ENCODE measurements at regions of chr15 and their contacts with region 1.

Region 1: GRCh38 chr15:56918046-56918938 is at the start of gene TCF12:
- DNase-seq: peak; percentile 95
- ATAC-seq: peak; percentile 85
- H3K4me3 Mint-ChIP-seq: peak within 1 kb of the TSS; percentile 82
- H3K27ac Mint-ChIP-seq: peak within 1 kb of the TSS; percentile 84
- H3K4me1 Mint-ChIP-seq: peaks cover 30% of the 10 kb centered on the region
- H3K27me3 Mint-ChIP-seq: no peaks in the 10 kb centered on the region
- total RNA-seq, gene TCF12: 61.1 to 74.9 TPM

Region 2: DNA sequence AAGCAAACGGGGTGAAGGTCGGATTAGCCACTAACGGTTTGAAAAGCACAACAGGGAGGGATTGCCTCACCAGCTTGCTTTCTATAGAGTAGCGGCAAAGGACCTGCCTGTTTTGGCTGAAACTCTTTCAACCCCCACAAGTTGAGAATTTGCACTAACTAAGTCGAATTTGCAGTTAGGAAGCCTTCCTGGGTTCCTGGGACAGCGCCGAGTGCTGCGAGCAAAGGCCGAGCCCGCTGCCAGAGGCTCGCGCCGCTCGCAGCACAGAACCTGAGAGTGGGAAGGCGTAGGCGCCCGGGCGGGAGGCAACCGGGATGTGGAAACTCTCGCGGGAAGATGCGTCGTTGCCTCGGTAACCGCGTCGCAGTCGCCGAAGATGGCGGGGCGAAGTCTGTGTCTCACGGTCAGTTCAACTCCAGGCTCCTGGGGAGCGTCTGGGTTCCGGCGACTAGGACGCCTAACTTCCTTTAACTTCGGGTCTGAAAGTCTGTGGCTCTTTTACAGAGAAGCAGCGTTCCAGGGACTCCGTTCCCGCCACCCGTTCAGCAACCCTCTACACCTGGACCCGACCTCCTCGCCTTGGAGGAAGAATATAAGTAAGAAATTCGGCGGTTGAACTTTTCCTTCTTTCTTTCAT is 553.1 kb before region 1 on chr15 and contains the start of gene TEX9:
- CTCF ChIA-PET with region 1: no interaction called
- POLR2A ChIA-PET with region 1: no interaction called
- intact Hi-C with region 1: loop called in 1 of 2 experiments (anchors 10 kb)
- DNase-seq: peak; percentile 91
- ATAC-seq: peak; percentile 98
- H3K4me3 Mint-ChIP-seq: peak within 1 kb of the TSS; percentile 76
- H3K27ac Mint-ChIP-seq: peak within 1 kb of the TSS; percentile 42
- H3K4me1 Mint-ChIP-seq: peaks cover 13% of the 10 kb centered on the region
- H3K27me3 Mint-ChIP-seq: peaks cover 25% of the 10 kb centered on the region
- total RNA-seq, gene TEX9: 1.5 to 1.8 TPM

Region 3: DNA sequence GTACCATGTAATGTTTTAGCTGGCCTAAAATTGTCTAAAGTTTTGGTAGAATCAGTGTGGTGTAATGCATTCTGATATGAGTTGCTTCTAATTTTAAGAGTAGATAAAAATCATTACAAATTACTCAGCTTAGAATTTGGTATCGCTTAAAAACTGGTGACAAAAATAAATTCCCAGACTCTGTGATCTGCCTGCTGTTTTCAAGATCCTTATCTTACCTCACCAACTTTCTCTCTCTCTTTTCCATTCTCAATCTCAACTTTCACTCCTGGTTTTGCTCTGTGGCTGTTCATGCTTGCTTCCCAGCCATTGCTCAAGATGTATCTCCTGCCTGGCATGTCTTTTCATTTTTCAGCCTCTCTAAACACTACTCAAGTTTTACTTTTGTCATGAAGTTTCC is 45.9 kb after region 1 on chr15:
- CTCF ChIA-PET with region 1: no interaction called
- POLR2A ChIA-PET with region 1: interaction called, 5 read pairs
- intact Hi-C with region 1: loop called in 1 of 2 experiments (anchors 5 kb)
- DNase-seq: no peak
- ATAC-seq: peak; percentile 55
- H3K4me3 Mint-ChIP-seq: no peak overlapping the region
- H3K27ac Mint-ChIP-seq: peak overlapping the region; percentile 56
- H3K4me1 Mint-ChIP-seq: peaks cover 45% of the 10 kb centered on the region
- H3K27me3 Mint-ChIP-seq: no peaks in the 10 kb centered on the region

Region 4: GRCh38 chr15:57025264-57025939 is 107.1 kb after region 1 on chr15:
- CTCF ChIA-PET with region 1: no interaction called
- POLR2A ChIA-PET with region 1: no interaction called
- intact Hi-C with region 1: loop called in 1 of 2 experiments (anchors 5 kb)
- DNase-seq: no peak
- ATAC-seq: no peak
- H3K4me3 Mint-ChIP-seq: no peak overlapping the region
- H3K27ac Mint-ChIP-seq: no peak overlapping the region
- H3K4me1 Mint-ChIP-seq: peaks cover 25% of the 10 kb centered on the region
- H3K27me3 Mint-ChIP-seq: no peaks in the 10 kb centered on the region

Region 5: DNA sequence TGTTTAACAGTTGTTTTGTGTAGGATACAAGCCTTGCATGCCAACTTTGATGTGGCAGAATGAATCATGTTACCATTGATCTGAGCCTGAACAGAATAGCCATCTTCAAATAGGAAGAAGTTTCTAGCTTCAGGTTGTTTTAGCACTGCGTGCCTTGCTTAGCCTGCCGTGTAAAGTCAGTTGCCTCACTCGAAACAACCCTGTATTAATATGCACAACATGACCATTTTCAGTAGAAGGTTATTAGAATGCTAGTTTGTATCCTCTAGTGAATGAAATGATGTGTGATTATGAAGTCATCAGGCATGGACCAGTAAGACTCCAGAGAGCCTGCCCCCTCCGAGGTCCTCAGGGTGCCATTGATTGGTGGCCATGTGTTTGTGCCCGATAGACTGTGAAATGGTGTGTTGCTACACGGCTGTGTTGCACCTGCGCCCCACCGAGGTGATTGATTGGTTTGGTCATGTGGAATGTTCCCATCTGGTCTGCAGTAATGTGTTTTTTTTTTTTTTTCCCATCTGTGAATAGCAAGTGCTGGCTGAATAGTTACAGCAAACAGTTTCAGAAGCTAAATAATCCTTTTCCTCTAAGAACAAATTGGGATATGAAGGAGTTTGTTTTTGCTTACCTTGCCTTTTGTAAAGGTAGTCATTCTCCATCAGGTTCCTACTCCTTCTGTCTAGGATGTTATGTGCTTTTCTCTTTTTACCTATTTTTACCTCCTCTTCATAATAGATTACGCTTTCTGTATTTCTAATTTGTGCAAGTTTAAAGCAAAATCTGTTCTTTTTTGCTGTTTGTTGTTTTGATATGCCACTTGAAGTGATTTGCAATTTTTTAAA is 215.1 kb after region 1 on chr15:
- CTCF ChIA-PET with region 1: no interaction called
- POLR2A ChIA-PET with region 1: no interaction called
- intact Hi-C with region 1: loop called in 1 of 2 experiments (anchors 1 kb)
- DNase-seq: peak; percentile 28
- ATAC-seq: peak; percentile 89
- H3K4me3 Mint-ChIP-seq: no peak overlapping the region
- H3K27ac Mint-ChIP-seq: no peak overlapping the region
- H3K4me1 Mint-ChIP-seq: peaks cover 44% of the 10 kb centered on the region
- H3K27me3 Mint-ChIP-seq: no peaks in the 10 kb centered on the region

Region 6: DNA sequence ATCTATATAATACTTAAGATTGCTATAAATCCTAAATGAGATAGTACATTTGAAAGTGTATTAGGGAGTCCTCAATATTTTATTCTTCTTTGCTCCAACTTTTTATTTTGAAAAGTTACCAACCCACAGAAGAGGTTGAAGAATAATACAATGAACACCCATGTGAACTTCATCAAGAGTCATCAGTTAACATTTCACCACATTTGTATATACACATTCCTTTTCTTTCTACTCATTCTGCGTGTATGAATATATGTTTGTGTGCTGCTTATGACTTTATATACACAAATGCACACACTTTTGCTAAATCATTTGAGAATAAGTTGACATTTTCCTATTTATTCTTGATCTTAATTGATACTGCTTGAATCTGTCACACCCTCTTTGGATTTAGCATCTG is 264.7 kb after region 1 on chr15:
- CTCF ChIA-PET with region 1: no interaction called
- POLR2A ChIA-PET with region 1: no interaction called
- intact Hi-C with region 1: no loop called
- DNase-seq: no peak
- ATAC-seq: no peak
- H3K4me3 Mint-ChIP-seq: no peak overlapping the region
- H3K27ac Mint-ChIP-seq: no peak overlapping the region
- H3K4me1 Mint-ChIP-seq: no peaks in the 10 kb centered on the region
- H3K27me3 Mint-ChIP-seq: no peaks in the 10 kb centered on the region

Region 7: DNA sequence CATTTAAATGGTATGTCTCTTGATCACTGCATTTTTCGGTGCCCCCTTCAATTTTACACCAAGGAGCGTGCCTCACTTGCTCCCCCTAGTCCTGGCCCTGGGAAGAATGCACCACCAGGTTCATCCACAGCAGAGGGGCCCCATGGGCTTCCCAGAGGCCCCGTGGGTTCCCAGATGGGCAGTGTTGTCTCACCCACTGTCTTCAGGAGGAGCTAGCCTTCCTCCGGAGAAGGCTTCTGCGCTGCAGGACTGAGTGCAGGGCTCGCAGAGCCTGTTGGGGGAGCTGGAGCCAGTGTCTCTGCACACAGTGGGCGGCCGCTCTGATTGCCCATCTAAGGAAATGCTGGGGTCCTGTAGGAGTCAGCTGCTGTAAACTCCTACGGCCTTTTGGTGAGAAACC is 834.1 kb after region 1 on chr15:
- CTCF ChIA-PET with region 1: no interaction called
- POLR2A ChIA-PET with region 1: no interaction called
- intact Hi-C with region 1: no loop called
- DNase-seq: no peak
- ATAC-seq: no peak
- H3K4me3 Mint-ChIP-seq: no peak overlapping the region
- H3K27ac Mint-ChIP-seq: no peak overlapping the region
- H3K4me1 Mint-ChIP-seq: no peaks in the 10 kb centered on the region
- H3K27me3 Mint-ChIP-seq: no peaks in the 10 kb centered on the region

Measured in activated CD4-positive, alpha-beta T cell treated with anti-CD3 and anti-CD28 coated beads for 36 hours (primary cell).